GM13977 (cell line): ENCODE measurements at regions of chr6 and their contacts with region 1.

Region 1: GRCh38 chr6:109187399-109188114 is 92.2 kb downstream of the CEP57L1 start:
- DNase-seq: peak; percentile 33
- CTCF ChIP-seq: peak; percentile 90

Region 2: GRCh38 chr6:108635505-108636226 is 551.9 kb before region 1 on chr6:
- in situ Hi-C with region 1: no loop called
- DNase-seq: no peak
- CTCF ChIP-seq: no peak

Region 3: GRCh38 chr6:108948181-108948661 is 239.3 kb before region 1 on chr6:
- in situ Hi-C with region 1: no loop called
- DNase-seq: no peak
- CTCF ChIP-seq: no peak

Region 4: DNA sequence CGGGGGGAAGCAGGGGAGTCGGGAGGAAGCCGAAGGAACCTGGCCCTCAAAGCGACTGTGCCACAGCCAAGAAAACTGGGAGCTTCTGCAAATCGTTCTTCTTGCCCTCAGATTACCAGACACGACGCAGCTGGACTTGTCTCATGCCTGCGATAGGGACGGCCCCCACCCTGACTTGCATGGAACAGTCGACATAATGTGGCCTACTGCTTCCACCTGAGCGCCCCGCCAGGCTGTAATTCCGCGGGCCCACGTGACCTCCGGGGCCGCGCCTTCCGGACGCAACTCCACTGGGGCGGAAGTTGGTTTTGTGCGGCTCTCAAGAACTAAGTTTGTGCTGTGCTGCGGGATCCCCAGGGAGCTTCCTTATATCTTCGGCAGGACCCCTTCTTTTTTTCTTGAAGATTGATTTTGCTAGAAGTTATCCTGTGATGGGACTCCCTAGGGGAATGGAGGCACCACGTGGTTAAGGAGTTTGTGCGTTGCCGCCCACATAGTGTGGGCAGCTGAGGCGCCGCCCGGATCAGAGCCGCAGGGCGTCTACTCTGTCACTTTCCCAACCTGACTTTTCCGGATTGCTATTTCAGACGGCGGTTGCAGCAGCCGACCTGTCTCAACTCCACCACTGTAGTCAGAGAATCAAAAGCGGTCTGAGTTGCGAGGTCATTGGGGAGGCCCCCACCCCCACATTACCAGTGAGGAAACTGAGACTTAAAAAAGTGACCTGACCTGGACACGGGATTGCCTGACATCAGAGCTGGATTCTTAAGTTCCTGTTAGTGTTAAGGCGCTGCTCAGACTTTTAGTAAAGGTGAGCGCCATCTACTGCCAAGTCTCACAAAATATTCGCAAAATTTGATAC is 195.2 kb after region 1 on chr6:
- in situ Hi-C with region 1: loop called (anchors 25 kb)
- DNase-seq: peak; percentile 91
- CTCF ChIP-seq: peak; percentile 61